Adrenal gland (tissue), 19 donors: ENCODE measurements at regions of chr3 and their contacts with region 1.

Region 1: GRCh38 chr3:15450438-15451217 is 23.2 kb downstream of the EAF1 start:
- DNase-seq: no peak
- H3K4me3 ChIP-seq: no peak overlapping the region
- H3K27ac ChIP-seq: no peak overlapping the region
- H3K4me1 ChIP-seq: no peaks in the 10 kb centered on the region
- H3K27me3 ChIP-seq: no peaks in the 10 kb centered on the region
- CTCF ChIP-seq: no peak
- POLR2A ChIP-seq: no peak

Region 2: GRCh38 chr3:15488002-15488401 is 37.4 kb after region 1 on chr3:
- intact Hi-C with region 1: loop called in 1 of 2 experiments (anchors 2 kb)
- DNase-seq: no peak
- H3K4me3 ChIP-seq: no peak overlapping the region
- H3K27ac ChIP-seq: no peak overlapping the region
- H3K4me1 ChIP-seq: no peaks in the 10 kb centered on the region
- H3K27me3 ChIP-seq: no peaks in the 10 kb centered on the region
- CTCF ChIP-seq: no peak
- POLR2A ChIP-seq: no peak

Region 3: GRCh38 chr3:15527031-15527459 is 76.4 kb after region 1 on chr3:
- intact Hi-C with region 1: no loop called
- DNase-seq: peak in 6 of 7 donors; percentile 18 to 77 (median 55)
- H3K4me3 ChIP-seq: no peak overlapping the region
- H3K27ac ChIP-seq: no peak overlapping the region
- H3K4me1 ChIP-seq: no peaks in the 10 kb centered on the region
- H3K27me3 ChIP-seq: no peaks in the 10 kb centered on the region
- CTCF ChIP-seq: peak in 1 of 6 experiments; percentile 16
- POLR2A ChIP-seq: no peak